ENCODE measurements at regions of chr19 and their contacts with region 1.

Region 1: GRCh38 chr19:12983542-12984142 is 11.6 kb upstream of the NFIX start:
- DNase-seq: peak; percentile 68 to 97 (median 80)

Region 2: GRCh38 chr19:13060964-13061927 is 77.6 kb after region 1 on chr19:
- intact Hi-C with region 1: loop called (anchors 2 kb)
- DNase-seq: peak; percentile 71 to 98 (median 90)

Region 3: GRCh38 chr19:13093407-13094105 is 109.9 kb after region 1 on chr19:
- intact Hi-C with region 1: loop called (anchors 1 kb)
- DNase-seq: peak; percentile 76 to 98 (median 86)

Region 4: GRCh38 chr19:13215546-13216380 is 232.1 kb after region 1 on chr19:
- intact Hi-C with region 1: no loop called
- DNase-seq: no peak